ENCODE measurements at regions of chr10 and their contacts with region 1.

Region 1: DNA sequence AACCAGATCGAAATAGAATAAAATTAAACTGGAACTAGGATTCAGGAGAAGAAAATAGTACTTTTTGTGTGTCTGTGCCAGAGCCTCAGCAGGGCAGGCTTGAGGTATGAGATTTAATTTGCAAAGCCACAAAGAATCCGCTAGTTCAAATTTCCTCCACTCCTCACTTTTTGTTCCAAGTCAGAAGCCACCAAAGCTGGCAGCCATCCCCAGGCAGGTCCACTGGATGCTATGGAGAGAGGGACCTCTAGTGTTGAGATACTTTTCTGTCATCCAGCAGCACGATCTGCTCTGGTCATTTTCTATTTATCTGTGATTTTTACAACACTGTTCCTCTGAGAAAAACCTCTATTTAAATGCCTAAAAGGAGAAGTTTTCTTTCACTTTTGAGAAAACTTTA is 147.9 kb upstream of the FRMD4A start:
- DNase-seq: peak; percentile 47
- H3K4me3 ChIP-seq: no peak overlapping the region
- H3K27ac ChIP-seq: no peak overlapping the region
- H3K4me1 ChIP-seq: peaks cover 14% of the 10 kb centered on the region
- H3K27me3 ChIP-seq: no peaks in the 10 kb centered on the region
- CTCF ChIP-seq: peak; percentile 60 to 79

Region 2: GRCh38 chr10:14195433-14195832 is 283.2 kb before region 1 on chr10:
- CTCF ChIA-PET with region 1: no interaction called
- dilution Hi-C with region 1: no loop called
- in situ Hi-C with region 1: loop called (anchors 5 to 10 kb)
- intact Hi-C with region 1: loop called (anchors 1 kb)
- DNase-seq: no peak
- H3K4me3 ChIP-seq: no peak overlapping the region
- H3K27ac ChIP-seq: no peak overlapping the region
- H3K4me1 ChIP-seq: no peaks in the 10 kb centered on the region
- H3K27me3 ChIP-seq: peaks cover 2% of the 10 kb centered on the region
- CTCF ChIP-seq: no peak

Region 3: GRCh38 chr10:14200698-14201544 is 277.7 kb before region 1 on chr10:
- CTCF ChIA-PET with region 1: no interaction called
- dilution Hi-C with region 1: no loop called
- in situ Hi-C with region 1: loop called (anchors 5 to 10 kb)
- intact Hi-C with region 1: loop called (anchors 1 kb)
- DNase-seq: no peak
- H3K4me3 ChIP-seq: no peak overlapping the region
- H3K27ac ChIP-seq: no peak overlapping the region
- H3K4me1 ChIP-seq: no peaks in the 10 kb centered on the region
- H3K27me3 ChIP-seq: peaks cover 2% of the 10 kb centered on the region
- CTCF ChIP-seq: peak in 1 of 2 donors; percentile 33

Region 4: DNA sequence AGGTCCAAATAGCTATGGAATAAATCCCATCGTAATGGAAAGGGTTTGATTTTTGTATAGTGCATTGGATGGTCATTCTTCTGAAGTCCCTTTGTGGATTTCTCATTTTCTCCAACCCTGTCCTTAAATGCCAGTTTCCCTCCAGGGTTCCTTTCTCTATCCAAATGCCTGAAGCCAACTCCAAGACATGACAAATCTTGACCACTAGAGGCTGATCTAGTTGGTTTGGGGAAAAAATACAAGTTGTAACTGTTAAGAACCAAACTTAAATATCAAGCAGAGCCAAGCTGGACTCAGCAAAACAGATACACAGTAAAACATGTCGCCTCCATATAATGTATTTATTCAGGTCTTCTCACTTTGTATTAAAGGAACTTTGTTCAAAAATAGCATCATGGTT is 176.6 kb before region 1 on chr10:
- CTCF ChIA-PET with region 1: no interaction called
- dilution Hi-C with region 1: no loop called
- in situ Hi-C with region 1: loop called in 1 of 2 experiments (anchors 10 kb)
- intact Hi-C with region 1: loop called (anchors 1 kb)
- DNase-seq: peak; percentile 7
- H3K4me3 ChIP-seq: no peak overlapping the region
- H3K27ac ChIP-seq: no peak overlapping the region
- H3K4me1 ChIP-seq: no peaks in the 10 kb centered on the region
- H3K27me3 ChIP-seq: peaks cover 1% of the 10 kb centered on the region
- CTCF ChIP-seq: peak; percentile 48 to 66

Region 5: DNA sequence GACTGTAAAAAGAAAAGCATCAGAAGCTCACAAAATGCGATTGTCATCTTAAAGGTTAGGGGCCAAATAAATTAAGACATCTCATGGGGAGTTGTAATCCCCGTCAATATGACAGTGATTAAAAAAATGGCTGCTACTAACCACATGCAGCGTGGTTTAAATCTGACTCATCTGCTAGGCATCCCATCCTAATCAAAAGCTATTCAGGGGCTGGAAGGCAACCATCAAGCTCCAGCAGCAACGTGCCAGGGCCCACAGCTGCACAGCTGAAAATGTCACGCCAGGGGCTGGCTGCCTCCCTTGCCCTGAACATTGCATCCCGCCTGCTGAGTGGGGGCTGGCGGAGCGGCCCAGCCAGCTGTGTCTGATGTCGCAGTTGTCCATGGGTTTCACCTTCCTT is 81.5 kb before region 1 on chr10:
- CTCF ChIA-PET with region 1: no interaction called
- dilution Hi-C with region 1: no loop called
- in situ Hi-C with region 1: no loop called
- intact Hi-C with region 1: loop called (anchors 5 kb)
- DNase-seq: peak; percentile 84
- H3K4me3 ChIP-seq: no peak overlapping the region
- H3K27ac ChIP-seq: peak overlapping the region; percentile 50
- H3K4me1 ChIP-seq: peaks cover 23% of the 10 kb centered on the region
- H3K27me3 ChIP-seq: no peaks in the 10 kb centered on the region
- CTCF ChIP-seq: no peak

Region 6: DNA sequence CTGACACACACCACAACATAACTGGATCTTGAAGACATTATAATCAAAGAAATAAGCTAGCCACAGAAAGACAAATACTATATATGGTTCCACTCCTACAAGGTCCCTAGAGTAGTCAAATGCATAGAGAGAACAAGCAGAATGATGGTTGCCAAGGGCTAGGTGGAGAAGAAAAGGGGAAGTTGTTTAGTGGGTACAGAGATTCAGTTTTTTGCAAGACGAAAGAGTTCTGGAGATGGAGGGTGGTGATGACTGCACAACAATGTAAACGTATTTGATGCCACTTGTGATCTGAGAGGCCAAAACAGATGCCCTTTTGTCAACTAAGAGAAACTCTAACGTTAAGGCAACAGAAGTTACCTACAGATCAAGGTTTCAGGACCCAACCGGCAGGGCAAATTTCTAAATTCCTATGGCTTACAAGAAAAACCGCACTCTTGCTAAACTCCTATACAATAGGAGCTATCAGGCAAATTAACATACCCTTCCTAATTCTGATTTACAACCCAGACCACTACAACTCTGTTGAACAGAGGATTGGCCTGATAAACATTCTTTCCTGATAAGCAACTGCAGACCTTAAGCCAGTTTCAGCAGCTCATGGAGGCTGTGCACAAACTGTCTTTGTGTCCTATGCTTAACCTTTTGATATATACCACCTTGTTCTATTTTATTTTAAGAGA is 227.1 kb after region 1 on chr10:
- CTCF ChIA-PET with region 1: no interaction called
- dilution Hi-C with region 1: no loop called
- in situ Hi-C with region 1: no loop called
- intact Hi-C with region 1: no loop called
- DNase-seq: no peak
- H3K4me3 ChIP-seq: no peak overlapping the region
- H3K27ac ChIP-seq: no peak overlapping the region
- H3K4me1 ChIP-seq: no peaks in the 10 kb centered on the region
- H3K27me3 ChIP-seq: no peaks in the 10 kb centered on the region
- CTCF ChIP-seq: no peak

Measured in mammary epithelial cell (primary cell).